Astrocyte of the cerebellum (primary cell): ENCODE measurements at regions of chr10 and their contacts with region 1.

Region 1: DNA sequence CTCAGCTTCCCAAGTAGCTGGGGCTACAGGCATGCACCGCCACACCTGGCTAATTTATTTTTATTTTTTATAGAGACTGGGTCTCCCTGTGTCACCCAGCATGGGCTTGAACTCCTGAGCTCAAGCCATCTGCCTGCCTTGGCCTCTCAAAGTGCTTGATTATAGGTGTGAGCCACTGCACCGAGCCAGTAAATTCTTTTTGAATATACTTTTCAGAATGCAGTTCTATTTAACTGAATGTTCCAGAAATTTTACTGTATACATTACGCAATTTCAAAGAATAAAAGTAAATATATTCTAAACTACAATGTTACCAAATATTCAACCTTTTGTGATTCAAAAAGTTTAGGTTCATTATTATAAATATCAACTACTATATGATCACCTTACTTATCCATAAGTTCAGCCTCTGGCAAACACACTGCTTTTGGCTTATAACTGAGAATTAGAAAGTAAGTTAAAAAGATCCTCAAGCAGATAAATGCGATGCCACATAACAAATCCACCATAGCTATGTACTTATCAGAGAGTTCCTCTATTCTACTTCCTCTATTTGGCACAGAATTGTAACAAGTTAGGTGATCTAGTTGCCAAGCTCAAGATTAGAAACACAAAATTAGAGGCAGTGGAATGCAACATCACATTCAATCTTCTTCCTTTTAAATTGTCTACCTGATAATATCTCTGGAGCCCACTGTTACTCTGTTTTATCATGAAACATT is 118.2 kb downstream of the ANK3 start:
- DNase-seq: no peak
- H3K4me3 ChIP-seq: no peak overlapping the region
- CTCF ChIP-seq: no peak

Region 2: GRCh38 chr10:60086862-60087261 is 184.6 kb before region 1 on chr10:
- in situ Hi-C with region 1: no loop called
- DNase-seq: no peak
- H3K4me3 ChIP-seq: no peak overlapping the region
- CTCF ChIP-seq: no peak

Region 3: GRCh38 chr10:60323162-60323561 is 51.7 kb after region 1 on chr10:
- in situ Hi-C with region 1: loop called (anchors 5 kb)
- DNase-seq: no peak
- H3K4me3 ChIP-seq: no peak overlapping the region
- CTCF ChIP-seq: no peak